GM13976 (cell line): ENCODE measurements at regions of chr3 and their contacts with region 1.

Region 1: GRCh38 chr3:8622873-8623691 is 21.5 kb downstream of the SSUH2 start:
- DNase-seq: peak; percentile 85
- CTCF ChIP-seq: peak; percentile 83

Region 2: DNA sequence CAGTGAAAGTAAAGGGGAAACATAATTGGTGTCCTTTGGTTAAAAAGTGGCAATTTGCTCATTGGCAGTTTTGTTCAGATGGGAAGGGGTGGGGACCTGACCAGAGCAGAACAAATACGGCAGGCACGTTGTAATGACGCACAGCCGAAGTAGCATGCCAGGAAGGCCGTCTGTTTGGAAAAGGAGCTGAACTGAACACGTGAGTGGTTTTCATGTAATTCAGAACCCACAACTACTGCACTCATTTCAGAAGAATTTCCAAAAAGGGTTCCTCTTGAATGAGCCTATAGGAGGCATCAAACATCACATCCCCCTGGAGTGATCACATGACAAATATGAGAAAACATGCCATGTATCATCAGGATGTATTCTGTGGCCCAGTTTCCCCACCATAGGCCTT is 164.4 kb before region 1 on chr3:
- in situ Hi-C with region 1: loop called (anchors 10 kb)
- DNase-seq: no peak
- CTCF ChIP-seq: no peak

Region 3: DNA sequence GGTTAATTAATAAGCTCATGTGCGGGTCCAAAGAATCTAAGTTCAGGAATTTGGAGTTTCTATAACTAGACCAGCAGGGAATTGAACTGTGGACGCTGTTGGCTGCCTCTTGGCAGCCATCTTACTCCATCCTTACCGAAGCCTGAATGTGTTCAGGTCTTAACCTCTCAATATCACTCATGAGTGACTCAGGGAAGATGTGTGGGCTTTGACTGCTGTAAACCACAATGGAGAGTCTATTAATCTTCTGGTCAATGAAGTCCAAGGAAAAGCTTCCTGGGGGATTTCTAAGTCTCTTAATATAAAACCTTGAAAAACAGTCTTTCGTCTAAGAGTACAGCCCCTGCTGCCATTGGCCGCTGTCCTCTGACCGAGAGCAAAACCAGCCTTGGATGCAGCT is 193.0 kb after region 1 on chr3:
- in situ Hi-C with region 1: no loop called
- DNase-seq: no peak
- CTCF ChIP-seq: no peak

Region 4: DNA sequence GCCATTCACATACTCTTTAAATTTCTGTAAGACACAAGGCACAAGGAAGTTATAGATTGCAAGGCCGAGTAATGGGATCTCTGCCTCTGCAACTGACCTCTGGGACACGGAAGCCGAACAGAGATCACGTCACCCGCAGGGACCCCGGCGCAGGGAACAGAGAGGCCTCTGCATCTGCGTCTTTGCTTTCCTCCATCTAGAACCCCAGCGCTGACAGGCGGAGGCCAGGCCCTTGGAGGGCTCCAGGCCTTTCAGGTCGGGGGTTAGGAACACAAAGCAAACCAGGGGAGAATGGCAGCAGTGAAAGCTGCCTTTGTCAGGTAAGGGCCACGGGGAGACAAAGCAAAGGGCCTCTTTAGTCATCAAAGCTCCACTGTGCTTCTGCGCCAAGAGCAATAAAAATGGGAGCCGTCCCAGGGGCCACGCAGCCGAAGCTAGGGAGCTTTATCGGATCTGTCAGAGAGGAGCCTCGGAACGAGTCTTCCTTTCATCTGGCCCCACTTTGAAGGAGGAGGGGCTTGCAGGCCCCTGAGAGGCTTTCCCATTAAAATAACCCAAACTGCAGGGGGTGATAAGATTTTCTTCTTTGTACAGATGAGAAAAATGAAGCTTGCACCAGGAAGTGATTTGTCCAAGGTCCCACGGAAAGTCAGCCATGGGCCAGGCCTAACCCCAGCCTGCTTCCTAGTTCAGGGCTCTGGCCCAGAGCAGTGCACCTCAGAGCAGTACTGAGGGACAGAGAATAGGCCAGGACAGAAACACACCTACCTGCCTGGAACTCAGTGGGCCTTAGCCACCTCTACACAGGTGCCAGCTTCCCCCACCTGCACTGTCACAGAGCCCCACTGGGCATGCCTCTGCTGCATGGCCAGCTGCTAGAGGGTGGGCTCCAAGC is 424.6 kb after region 1 on chr3:
- in situ Hi-C with region 1: no loop called
- DNase-seq: no peak
- CTCF ChIP-seq: no peak